ENCODE measurements at regions of chr11 and their contacts with region 1.

Region 1: GRCh38 chr11:86202013-86202336 is 42.6 kb upstream of the EED start:
- DNase-seq: peak in 2 of 3 donors; percentile 68 to 79
- H3K4me3 ChIP-seq: peak overlapping the region in 6 of 7 experiments; percentile 53 to 87 (median 73)
- H3K27ac ChIP-seq: peak overlapping the region in 1 of 2 experiments; percentile 82
- H3K4me1 ChIP-seq: peaks cover 16 to 39% (median 22%) of the 10 kb centered on the region in 4 experiments
- H3K27me3 ChIP-seq: no peaks in the 10 kb centered on the region

Region 2: GRCh38 chr11:86041975-86042378 is 160.0 kb before region 1 on chr11:
- CTCF ChIA-PET with region 1: interaction called, 64 read pairs
- POLR2A ChIA-PET with region 1: interaction called, 3 read pairs
- DNase-seq: peak; percentile 86 to 93 (median 92)
- H3K4me3 ChIP-seq: peak overlapping the region in 1 of 7 experiments; percentile 37
- H3K27ac ChIP-seq: peak overlapping the region in 1 of 2 experiments; percentile 58
- H3K4me1 ChIP-seq: peaks cover 0 to 37% (median 21%) of the 10 kb centered on the region in 4 experiments
- H3K27me3 ChIP-seq: no peaks in the 10 kb centered on the region

Region 3: GRCh38 chr11:86068951-86069407 is 133.0 kb before region 1 on chr11 and contains the start of gene PICALM:
- CTCF ChIA-PET with region 1: interaction called, 13 read pairs
- POLR2A ChIA-PET with region 1: interaction called, 4 read pairs
- DNase-seq: peak; percentile 99 to 100 (median 100)
- H3K4me3 ChIP-seq: peak within 1 kb of the TSS; percentile 86 to 100 (median 97)
- H3K27ac ChIP-seq: peak within 1 kb of the TSS; percentile 88 to 96
- H3K4me1 ChIP-seq: peaks cover 14 to 40% (median 33%) of the 10 kb centered on the region in 4 experiments
- H3K27me3 ChIP-seq: no peaks in the 10 kb centered on the region

Region 4: GRCh38 chr11:86182976-86183584 is 18.9 kb before region 1 on chr11:
- CTCF ChIA-PET with region 1: interaction called, 15 read pairs
- POLR2A ChIA-PET with region 1: no interaction called
- DNase-seq: no peak
- H3K4me3 ChIP-seq: no peak overlapping the region
- H3K27ac ChIP-seq: peak overlapping the region in 1 of 2 experiments; percentile 62
- H3K4me1 ChIP-seq: peaks cover 30 to 49% (median 37%) of the 10 kb centered on the region in 4 experiments
- H3K27me3 ChIP-seq: no peaks in the 10 kb centered on the region

Region 5: GRCh38 chr11:86218125-86219084 is 16.4 kb after region 1 on chr11:
- CTCF ChIA-PET with region 1: interaction called, 11 read pairs
- POLR2A ChIA-PET with region 1: no interaction called
- DNase-seq: peak; percentile 72 to 89 (median 81)
- H3K4me3 ChIP-seq: peak overlapping the region in 5 of 7 experiments; percentile 24 to 75 (median 32)
- H3K27ac ChIP-seq: no peak overlapping the region
- H3K4me1 ChIP-seq: peaks cover 0 to 7% (median 3%) of the 10 kb centered on the region in 4 experiments
- H3K27me3 ChIP-seq: no peaks in the 10 kb centered on the region

Region 6: GRCh38 chr11:86237267-86237804 is 35.4 kb after region 1 on chr11:
- CTCF ChIA-PET with region 1: no interaction called
- POLR2A ChIA-PET with region 1: no interaction called
- DNase-seq: no peak
- H3K4me3 ChIP-seq: no peak overlapping the region
- H3K27ac ChIP-seq: no peak overlapping the region
- H3K4me1 ChIP-seq: peaks cover 0 to 5% (median 1%) of the 10 kb centered on the region in 4 experiments
- H3K27me3 ChIP-seq: no peaks in the 10 kb centered on the region

Region 7: DNA sequence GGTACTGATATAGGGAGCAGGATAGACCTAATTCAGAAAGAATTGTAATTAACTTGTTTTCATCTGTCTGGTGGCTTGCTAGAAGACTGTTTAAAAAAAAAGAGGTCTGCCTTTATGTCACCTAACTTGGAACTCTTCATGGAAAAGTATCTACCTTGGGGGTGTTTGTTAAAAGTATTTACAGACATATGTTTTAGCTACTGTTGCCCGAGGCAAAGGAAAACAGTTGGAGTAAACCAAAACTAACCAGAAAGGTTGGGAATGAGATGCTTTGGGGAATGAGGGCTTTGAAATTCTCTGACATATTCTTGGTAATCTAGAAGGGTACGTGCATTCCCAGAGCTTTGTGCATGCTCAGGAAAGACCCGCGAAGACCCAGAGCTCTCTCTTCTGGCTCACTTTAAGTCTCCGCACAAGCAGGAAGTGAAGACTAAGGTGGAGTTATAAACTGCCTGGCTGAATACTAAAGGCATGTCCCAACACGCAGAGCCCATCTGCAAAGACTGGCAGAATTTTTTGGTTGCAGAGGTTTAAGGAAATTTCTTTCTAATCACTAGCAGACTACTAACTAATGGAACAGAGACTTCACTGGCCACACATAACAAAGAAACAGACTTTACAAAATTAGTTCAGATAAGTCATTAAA is 133.3 kb after region 1 on chr11:
- CTCF ChIA-PET with region 1: no interaction called
- POLR2A ChIA-PET with region 1: no interaction called
- DNase-seq: no peak
- H3K4me3 ChIP-seq: no peak overlapping the region
- H3K27ac ChIP-seq: no peak overlapping the region
- H3K4me1 ChIP-seq: no peaks in the 10 kb centered on the region
- H3K27me3 ChIP-seq: no peaks in the 10 kb centered on the region

Measured in common myeloid progenitor, CD34-positive (primary cell).